B cell (primary cell): ENCODE measurements at regions of chr1 and their contacts with region 1.

Region 1: DNA sequence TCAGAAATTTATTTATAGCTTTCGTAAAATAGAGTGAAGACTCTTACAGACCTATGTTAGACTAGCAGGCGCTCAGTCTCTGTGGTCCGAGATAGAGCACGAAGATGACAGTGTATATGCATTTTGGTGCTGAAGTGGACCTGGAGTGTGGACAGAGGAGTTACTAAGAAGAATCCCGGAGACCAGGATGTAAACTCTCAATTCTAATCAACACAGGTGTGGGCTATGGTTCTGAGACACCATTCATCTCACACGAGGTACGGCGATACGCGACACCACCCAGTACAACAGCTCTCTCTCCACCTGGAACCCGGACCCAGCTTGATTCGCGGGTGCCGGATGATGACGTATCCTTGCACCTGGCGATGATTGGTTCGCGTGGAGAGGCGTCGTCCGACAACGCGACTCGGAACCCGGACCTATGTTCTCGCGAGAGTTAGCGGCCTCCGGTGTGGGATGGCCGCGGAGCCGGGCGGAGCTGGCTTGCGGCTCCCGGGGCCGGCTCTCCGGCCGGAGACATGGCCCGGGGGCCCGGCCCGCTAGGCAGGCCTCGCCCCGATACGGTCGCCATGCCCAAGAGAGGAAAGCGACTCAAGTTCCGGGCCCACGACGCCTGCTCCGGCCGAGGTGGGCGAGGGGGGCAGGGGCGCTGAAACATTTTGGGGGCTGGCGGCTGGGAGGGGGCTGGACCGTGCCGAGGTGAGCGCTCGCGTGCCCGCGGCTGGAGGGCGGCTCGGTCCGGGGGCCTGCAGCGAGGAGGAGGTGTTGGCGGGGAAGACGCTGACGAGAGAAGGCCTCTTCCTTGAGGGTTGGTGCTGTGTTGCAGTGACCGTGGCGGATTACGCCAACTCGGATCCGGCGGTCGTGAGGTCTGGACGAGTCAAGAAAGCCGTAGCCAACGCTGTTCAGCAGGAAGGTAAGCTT is at the start of gene TMEM183A:
- DNase-seq: peak; percentile 96
- ATAC-seq: peak; percentile 90
- H3K4me3 ChIP-seq: peak within 1 kb of the TSS; percentile 89 to 99 (median 95)
- H3K4me3 Mint-ChIP-seq: peak within 1 kb of the TSS; percentile 99
- H3K27ac ChIP-seq: peak within 1 kb of the TSS; percentile 89 to 96
- H3K27ac Mint-ChIP-seq: peak within 1 kb of the TSS; percentile 96
- H3K4me1 ChIP-seq: peaks cover 16 to 17% of the 10 kb centered on the region in 2 donors
- H3K4me1 Mint-ChIP-seq: peaks cover 32% of the 10 kb centered on the region
- H3K27me3 ChIP-seq: no peaks in the 10 kb centered on the region
- H3K27me3 Mint-ChIP-seq: no peaks in the 10 kb centered on the region
- CTCF ChIP-seq: no peak
- total RNA-seq, gene TMEM183A: 64.8 and 65.2 TPM in 2 replicates

Region 2: DNA sequence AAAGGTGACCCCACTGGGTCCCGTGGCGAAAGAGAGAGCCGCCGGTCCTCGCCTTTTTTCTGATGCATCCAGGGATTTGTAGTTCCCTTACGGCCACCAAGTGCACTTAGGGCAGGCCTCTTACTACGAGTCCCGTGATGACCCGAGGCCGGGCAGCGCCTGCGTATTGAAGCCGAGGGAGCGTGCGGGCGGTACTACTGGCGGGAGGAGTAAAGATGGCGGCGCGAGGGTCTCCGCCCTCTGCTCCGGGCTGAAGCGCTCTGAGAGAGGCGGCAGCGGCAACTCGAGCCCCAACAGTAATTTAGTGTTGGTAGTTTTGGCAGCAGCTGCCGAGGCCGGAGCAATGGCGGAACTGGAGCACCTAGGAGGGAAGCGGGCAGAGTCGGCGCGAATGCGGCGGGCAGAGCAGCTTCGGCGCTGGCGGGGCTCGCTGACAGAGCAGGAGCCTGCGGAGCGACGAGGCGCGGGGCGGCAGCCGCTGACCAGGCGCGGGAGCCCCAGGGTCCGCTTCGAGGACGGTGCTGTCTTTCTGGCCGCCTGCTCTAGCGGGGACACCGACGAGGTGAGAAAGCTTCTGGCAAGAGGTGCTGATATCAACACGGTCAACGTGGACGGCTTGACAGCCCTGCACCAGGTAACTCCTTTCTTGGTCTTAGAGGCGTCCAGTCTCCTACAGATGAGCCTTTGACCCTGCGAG is 658.6 kb before region 1 on chr1 and contains the start of gene PPP1R12B:
- CTCF ChIA-PET with region 1: no interaction called
- POLR2A ChIA-PET with region 1: no interaction called
- intact Hi-C with region 1: loop called (anchors 2 kb)
- DNase-seq: peak; percentile 97
- ATAC-seq: peak; percentile 94
- H3K4me3 ChIP-seq: peak within 1 kb of the TSS; percentile 74 to 97 (median 89)
- H3K4me3 Mint-ChIP-seq: peak within 1 kb of the TSS; percentile 91
- H3K27ac ChIP-seq: peak within 1 kb of the TSS; percentile 3 to 79
- H3K27ac Mint-ChIP-seq: peak within 1 kb of the TSS; percentile 90
- H3K4me1 ChIP-seq: peaks cover 11 to 12% of the 10 kb centered on the region in 2 donors
- H3K4me1 Mint-ChIP-seq: peaks cover 29% of the 10 kb centered on the region
- H3K27me3 ChIP-seq: no peaks in the 10 kb centered on the region
- H3K27me3 Mint-ChIP-seq: no peaks in the 10 kb centered on the region
- CTCF ChIP-seq: no peak
- total RNA-seq, gene PPP1R12B: 36.8 and 49.6 TPM in 2 replicates

Region 3: GRCh38 chr1:202462342-202463076 is 544.7 kb before region 1 on chr1:
- CTCF ChIA-PET with region 1: no interaction called
- POLR2A ChIA-PET with region 1: no interaction called
- intact Hi-C with region 1: loop called (anchors 10 kb)
- DNase-seq: no peak
- ATAC-seq: no peak
- H3K4me3 ChIP-seq: no peak overlapping the region
- H3K4me3 Mint-ChIP-seq: no peak overlapping the region
- H3K27ac ChIP-seq: no peak overlapping the region
- H3K27ac Mint-ChIP-seq: no peak overlapping the region
- H3K4me1 ChIP-seq: no peaks in the 10 kb centered on the region
- H3K4me1 Mint-ChIP-seq: no peaks in the 10 kb centered on the region
- H3K27me3 ChIP-seq: no peaks in the 10 kb centered on the region
- H3K27me3 Mint-ChIP-seq: no peaks in the 10 kb centered on the region
- CTCF ChIP-seq: no peak

Region 4: DNA sequence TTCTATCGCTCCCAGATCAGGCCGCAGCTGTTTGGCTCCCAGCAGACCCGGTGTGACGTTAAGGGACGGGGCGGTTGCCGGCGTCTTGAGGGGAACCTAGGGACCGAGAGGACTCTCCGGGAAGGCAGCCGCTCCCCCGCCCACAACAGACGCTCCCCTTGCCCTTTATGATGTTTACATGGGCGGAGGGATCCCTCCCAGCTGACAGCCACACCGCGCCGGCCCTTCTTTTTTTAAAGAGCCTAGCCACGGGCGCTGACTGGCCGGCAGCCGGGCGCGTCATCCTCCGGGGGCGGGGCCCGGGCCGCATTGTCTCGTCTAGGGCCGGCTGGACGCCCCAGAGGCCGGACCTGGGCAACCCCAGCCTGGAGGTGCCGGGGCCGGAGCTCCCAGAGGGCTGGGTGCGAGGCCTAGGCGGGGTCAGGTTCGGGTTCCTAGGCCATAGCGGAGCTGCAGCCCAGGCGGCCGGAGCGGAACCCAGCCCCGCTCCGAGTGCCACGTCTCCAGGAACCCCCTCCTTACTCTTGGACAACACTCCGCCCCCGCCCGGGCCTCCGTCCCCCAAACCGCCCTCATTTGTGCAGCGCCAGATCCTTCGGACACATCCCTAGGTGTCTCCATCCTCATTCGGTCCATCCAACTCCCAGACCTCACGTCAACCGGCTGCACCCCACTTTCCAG is 196.5 kb before region 1 on chr1 and contains the start of gene PCAT6:
- CTCF ChIA-PET with region 1: no interaction called
- POLR2A ChIA-PET with region 1: no interaction called
- intact Hi-C with region 1: loop called (anchors 1 kb)
- DNase-seq: peak; percentile 93
- ATAC-seq: peak; percentile 81
- H3K4me3 ChIP-seq: peak within 1 kb of the TSS; percentile 72 to 91 (median 86)
- H3K4me3 Mint-ChIP-seq: peak within 1 kb of the TSS; percentile 87
- H3K27ac ChIP-seq: peak within 1 kb of the TSS; percentile 35 to 69
- H3K27ac Mint-ChIP-seq: peak within 1 kb of the TSS; percentile 91
- H3K4me1 ChIP-seq: peaks cover 23 to 33% of the 10 kb centered on the region in 2 donors
- H3K4me1 Mint-ChIP-seq: peaks cover 32% of the 10 kb centered on the region
- H3K27me3 ChIP-seq: peaks cover 0 to 15% (median 2%) of the 10 kb centered on the region in 4 experiments
- H3K27me3 Mint-ChIP-seq: peaks cover 6% of the 10 kb centered on the region
- CTCF ChIP-seq: no peak
- total RNA-seq, gene PCAT6: 1.6 TPM in 1 of 2 replicates, not detected in the other

Region 5: GRCh38 chr1:202835548-202836090 is 171.6 kb before region 1 on chr1:
- CTCF ChIA-PET with region 1: no interaction called
- POLR2A ChIA-PET with region 1: no interaction called
- intact Hi-C with region 1: no loop called
- DNase-seq: no peak
- ATAC-seq: no peak
- H3K4me3 ChIP-seq: no peak overlapping the region
- H3K4me3 Mint-ChIP-seq: no peak overlapping the region
- H3K27ac ChIP-seq: no peak overlapping the region
- H3K27ac Mint-ChIP-seq: no peak overlapping the region
- H3K4me1 ChIP-seq: peaks cover 19 to 29% of the 10 kb centered on the region in 2 donors
- H3K4me1 Mint-ChIP-seq: peaks cover 22% of the 10 kb centered on the region
- H3K27me3 ChIP-seq: peaks cover 0 to 4% (median 0%) of the 10 kb centered on the region in 4 experiments
- H3K27me3 Mint-ChIP-seq: peaks cover 8% of the 10 kb centered on the region
- CTCF ChIP-seq: no peak

Region 6: DNA sequence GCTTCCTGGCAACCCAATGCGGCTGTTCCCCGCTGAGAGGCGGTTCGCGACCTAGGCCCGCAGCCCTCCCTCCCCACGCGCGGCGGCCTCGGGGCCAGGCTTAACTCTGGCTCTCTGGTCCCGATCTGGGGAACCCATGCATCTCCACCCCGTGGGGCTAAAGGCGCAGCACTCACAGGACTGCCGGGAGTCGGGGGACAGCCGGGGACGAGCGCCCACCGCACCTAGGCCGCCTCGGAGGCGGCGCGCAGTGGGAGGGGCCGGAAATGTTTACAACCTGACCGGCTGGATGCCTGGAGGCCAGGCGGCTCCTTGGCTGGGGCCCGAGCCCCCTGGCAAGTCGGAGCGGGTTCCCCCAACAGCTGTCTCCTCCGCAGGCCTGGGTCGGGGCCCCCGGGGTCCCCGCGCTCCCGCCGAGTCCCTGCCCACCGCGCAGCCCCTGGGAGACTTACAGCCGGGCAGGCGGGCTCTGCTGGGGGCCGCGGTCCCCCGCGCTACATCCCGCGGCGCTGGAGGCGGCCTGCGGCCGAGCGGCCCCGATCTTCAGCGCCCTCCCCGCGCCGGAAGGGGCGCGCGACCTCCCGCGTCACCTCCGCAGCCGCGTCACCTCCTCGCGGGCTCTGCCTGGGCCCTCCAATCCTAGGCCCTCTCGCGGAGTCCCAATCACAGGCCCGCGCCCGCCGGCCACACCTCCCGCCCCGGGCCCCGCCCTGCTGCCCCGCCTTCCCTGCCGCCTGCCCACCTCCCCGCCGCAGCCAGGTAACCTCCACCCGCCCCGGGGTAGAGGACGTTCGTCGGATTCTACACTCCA is 49.3 kb before region 1 on chr1 and contains the start of gene ADIPOR1:
- CTCF ChIA-PET with region 1: no interaction called
- POLR2A ChIA-PET with region 1: no interaction called
- intact Hi-C with region 1: loop called (anchors 2 kb)
- DNase-seq: peak; percentile 92
- ATAC-seq: peak; percentile 98
- H3K4me3 ChIP-seq: peak within 1 kb of the TSS; percentile 79 to 93 (median 87)
- H3K4me3 Mint-ChIP-seq: peak within 1 kb of the TSS; percentile 90
- H3K27ac ChIP-seq: peak within 1 kb of the TSS; percentile 79 to 95
- H3K27ac Mint-ChIP-seq: peak within 1 kb of the TSS; percentile 86
- H3K4me1 ChIP-seq: peaks cover 25 to 27% of the 10 kb centered on the region in 2 donors
- H3K4me1 Mint-ChIP-seq: peaks cover 40% of the 10 kb centered on the region
- H3K27me3 ChIP-seq: no peaks in the 10 kb centered on the region
- H3K27me3 Mint-ChIP-seq: no peaks in the 10 kb centered on the region
- CTCF ChIP-seq: no peak
- total RNA-seq, gene ADIPOR1: 44.2 and 46.6 TPM in 2 replicates

Region 7: DNA sequence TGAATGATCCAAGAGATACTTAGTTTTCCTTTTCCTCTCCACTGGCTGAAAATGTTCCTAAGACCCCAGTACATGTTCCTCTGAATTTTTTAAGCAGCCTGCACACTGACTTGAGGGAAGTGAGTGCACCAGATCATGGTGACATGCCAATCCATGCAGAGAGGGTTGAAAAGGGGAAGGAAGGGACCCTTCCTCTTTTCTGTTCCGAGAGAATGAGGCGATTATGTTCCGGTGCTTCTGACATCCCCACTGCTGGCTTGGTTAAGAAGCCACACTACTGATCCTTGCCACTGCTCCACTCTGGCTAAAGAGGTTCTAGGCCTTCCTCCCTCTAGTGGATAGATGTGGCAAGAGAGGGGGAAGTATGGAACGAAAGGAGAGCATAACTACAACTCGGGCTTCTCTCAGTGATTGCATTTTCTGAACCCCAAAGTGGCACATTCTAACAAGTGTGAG is 38.3 kb before region 1 on chr1:
- CTCF ChIA-PET with region 1: interaction called, 13 read pairs
- POLR2A ChIA-PET with region 1: interaction called, 11 read pairs
- intact Hi-C with region 1: loop called (anchors 1 kb)
- DNase-seq: peak; percentile 90
- ATAC-seq: peak; percentile 62
- H3K4me3 ChIP-seq: peak overlapping the region in 4 of 5 experiments; percentile 8 to 69 (median 50)
- H3K4me3 Mint-ChIP-seq: peak overlapping the region; percentile 97
- H3K27ac ChIP-seq: peak overlapping the region; percentile 73 to 75
- H3K27ac Mint-ChIP-seq: peak overlapping the region; percentile 95
- H3K4me1 ChIP-seq: peaks cover 28 to 38% of the 10 kb centered on the region in 2 donors
- H3K4me1 Mint-ChIP-seq: peaks cover 39% of the 10 kb centered on the region
- H3K27me3 ChIP-seq: no peaks in the 10 kb centered on the region
- H3K27me3 Mint-ChIP-seq: no peaks in the 10 kb centered on the region
- CTCF ChIP-seq: peak; percentile 74

Region 8: GRCh38 chr1:203026031-203026989 is 19.1 kb after region 1 on chr1 and contains the start of gene PPFIA4:
- CTCF ChIA-PET with region 1: interaction called, 5 read pairs
- POLR2A ChIA-PET with region 1: interaction called, 3 read pairs
- intact Hi-C with region 1: loop called (anchors 1 kb)
- DNase-seq: peak; percentile 90
- ATAC-seq: peak; percentile 96
- H3K4me3 ChIP-seq: peak within 1 kb of the TSS; percentile 53 to 68 (median 65)
- H3K4me3 Mint-ChIP-seq: peak within 1 kb of the TSS; percentile 84
- H3K27ac ChIP-seq: peak within 1 kb of the TSS in 1 of 2 donors; percentile 48
- H3K27ac Mint-ChIP-seq: peak within 1 kb of the TSS; percentile 62
- H3K4me1 ChIP-seq: peaks cover 10 to 16% of the 10 kb centered on the region in 2 donors
- H3K4me1 Mint-ChIP-seq: peaks cover 16% of the 10 kb centered on the region
- H3K27me3 ChIP-seq: peaks cover 0 to 16% (median 5%) of the 10 kb centered on the region in 4 experiments
- H3K27me3 Mint-ChIP-seq: peaks cover 7% of the 10 kb centered on the region
- CTCF ChIP-seq: no peak
- total RNA-seq, gene PPFIA4: 0.62 and 0.75 TPM in 2 replicates

Region 9: GRCh38 chr1:203117611-203118575 is 110.7 kb after region 1 on chr1:
- CTCF ChIA-PET with region 1: no interaction called
- POLR2A ChIA-PET with region 1: no interaction called
- intact Hi-C with region 1: no loop called
- DNase-seq: peak; percentile 26
- ATAC-seq: peak; percentile 36
- H3K4me3 ChIP-seq: no peak overlapping the region
- H3K4me3 Mint-ChIP-seq: no peak overlapping the region
- H3K27ac ChIP-seq: no peak overlapping the region
- H3K27ac Mint-ChIP-seq: no peak overlapping the region
- H3K4me1 ChIP-seq: no peaks in the 10 kb centered on the region
- H3K4me1 Mint-ChIP-seq: peaks cover 5% of the 10 kb centered on the region
- H3K27me3 ChIP-seq: peaks cover 0 to 34% (median 13%) of the 10 kb centered on the region in 4 experiments
- H3K27me3 Mint-ChIP-seq: peaks cover 61% of the 10 kb centered on the region
- CTCF ChIP-seq: no peak